HepG2 (cell line): ENCODE measurements at regions of chr1 and their contacts with region 1.

Region 1: GRCh38 chr1:230310381-230311163 is 115.6 kb downstream of the PGBD5 start:
- DNase-seq: peak; percentile 60
- ATAC-seq: peak; percentile 90
- H3K4me3 ChIP-seq: no peak overlapping the region
- H3K27ac ChIP-seq: no peak overlapping the region
- H3K4me1 ChIP-seq: 0 out of 2 replicates have a peak, but pooled peaks cover 5% of the 10 kb centered on the region
- H3K27me3 ChIP-seq: peaks cover 2 to 15% of the 10 kb centered on the region in 2 experiments; a peak in 2 of 5 replicates
- CTCF ChIP-seq: peak; percentile 94
- EP300 ChIP-seq: no peak
- POLR2A ChIP-seq: no peak
- RAD21 ChIP-seq: peak; percentile 87

Region 2: GRCh38 chr1:229661022-229661877 is 649.3 kb before region 1 on chr1:
- CTCF ChIA-PET with region 1: interaction called, 14 read pairs
- POLR2A ChIA-PET with region 1: no interaction called
- in situ Hi-C with region 1: loop called (anchors 5 kb)
- intact Hi-C with region 1: loop called (anchors 1 kb)
- DNase-seq: peak; percentile 32
- ATAC-seq: peak; percentile 94
- H3K4me3 ChIP-seq: no peak overlapping the region
- H3K27ac ChIP-seq: no peak overlapping the region
- H3K4me1 ChIP-seq: no peaks in the 10 kb centered on the region
- H3K27me3 ChIP-seq: no peaks in the 10 kb centered on the region
- CTCF ChIP-seq: peak; percentile 91
- EP300 ChIP-seq: no peak
- POLR2A ChIP-seq: no peak
- RAD21 ChIP-seq: peak; percentile 67

Region 3: DNA sequence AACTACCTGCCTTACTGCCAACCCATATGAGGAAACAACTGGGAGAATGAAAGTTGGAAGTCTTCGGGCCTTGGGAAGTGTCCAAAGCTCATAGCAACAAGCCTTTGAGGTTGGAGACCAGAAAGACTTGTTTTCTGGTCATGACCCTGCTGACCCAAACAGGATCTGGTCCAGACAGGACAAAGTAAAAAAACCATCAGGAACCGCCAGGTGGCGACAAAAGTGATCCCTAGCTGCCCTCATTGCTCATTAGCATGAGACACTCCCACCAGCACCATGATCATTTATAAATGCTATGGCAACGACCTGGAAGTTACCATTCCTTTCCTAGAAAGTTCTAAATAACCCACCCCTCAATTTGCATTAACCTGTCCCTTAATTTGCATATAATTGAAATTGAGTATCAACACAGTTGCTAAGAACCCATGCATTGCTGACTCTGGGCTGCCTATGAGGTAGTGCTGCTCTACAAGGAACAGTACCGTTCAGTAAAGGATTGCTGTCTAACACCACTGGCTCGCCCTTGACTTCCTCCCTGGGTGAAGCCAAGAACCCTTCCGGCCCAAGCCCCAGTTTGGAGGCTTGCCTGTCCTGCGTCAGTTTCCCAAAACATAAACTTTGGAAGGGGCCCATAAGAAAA is 595.5 kb before region 1 on chr1:
- CTCF ChIA-PET with region 1: interaction called, 13 read pairs
- POLR2A ChIA-PET with region 1: no interaction called
- in situ Hi-C with region 1: no loop called
- intact Hi-C with region 1: no loop called
- DNase-seq: peak; percentile 37
- ATAC-seq: peak; percentile 65
- H3K4me3 ChIP-seq: no peak overlapping the region
- H3K27ac ChIP-seq: no peak overlapping the region
- H3K4me1 ChIP-seq: peaks cover 16% of the 10 kb centered on the region
- H3K27me3 ChIP-seq: no peaks in the 10 kb centered on the region
- CTCF ChIP-seq: peak; percentile 56
- EP300 ChIP-seq: no peak
- POLR2A ChIP-seq: no peak
- RAD21 ChIP-seq: no peak

Region 4: DNA sequence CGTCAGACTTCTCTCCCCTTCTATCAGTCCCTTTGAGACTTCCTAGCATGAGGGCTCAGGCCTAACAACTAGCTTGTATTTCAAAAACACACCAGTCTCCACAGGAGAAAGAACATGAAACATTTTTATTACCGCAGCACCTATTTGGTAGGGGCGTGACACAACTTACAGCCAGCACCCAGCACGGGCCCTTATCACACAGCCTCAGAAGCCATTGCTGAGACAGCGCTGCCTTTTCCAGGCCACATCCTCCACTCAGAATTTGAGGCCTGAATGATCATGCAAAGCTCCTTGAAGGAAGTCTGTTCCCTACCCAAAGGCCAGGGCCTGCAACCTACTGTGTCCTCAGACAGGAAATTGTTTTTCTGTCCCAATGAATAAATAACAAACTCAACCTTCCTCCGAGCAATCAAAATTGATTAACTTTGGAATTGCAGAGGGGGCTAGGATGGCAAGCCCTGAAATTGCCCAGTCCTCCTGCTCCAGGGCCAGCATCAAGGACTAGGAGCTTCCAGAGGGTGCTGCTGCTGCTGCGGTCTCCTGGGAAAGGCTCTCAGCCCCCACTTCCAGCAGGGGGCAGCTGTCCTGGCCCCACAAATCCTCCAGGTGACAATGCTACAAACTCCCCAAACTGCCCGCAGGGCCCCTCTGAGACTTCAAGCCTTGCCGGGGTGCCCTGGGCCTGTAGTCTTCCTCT is 337.8 kb before region 1 on chr1:
- CTCF ChIA-PET with region 1: no interaction called
- POLR2A ChIA-PET with region 1: no interaction called
- in situ Hi-C with region 1: loop called (anchors 10 kb)
- intact Hi-C with region 1: no loop called
- DNase-seq: peak; percentile 9
- ATAC-seq: peak; percentile 87
- H3K4me3 ChIP-seq: no peak overlapping the region
- H3K27ac ChIP-seq: no peak overlapping the region
- H3K4me1 ChIP-seq: no peaks in the 10 kb centered on the region
- H3K27me3 ChIP-seq: 0 out of 5 replicates have a peak, but pooled peaks cover 0 to 3% of the 10 kb centered on the region in 2 experiments
- CTCF ChIP-seq: peak; percentile 67
- EP300 ChIP-seq: no peak
- POLR2A ChIP-seq: no peak
- RAD21 ChIP-seq: peak; percentile 60

Region 5: GRCh38 chr1:229979993-229980392 is 330.6 kb before region 1 on chr1:
- CTCF ChIA-PET with region 1: no interaction called
- POLR2A ChIA-PET with region 1: no interaction called
- in situ Hi-C with region 1: loop called (anchors 10 kb)
- intact Hi-C with region 1: loop called (anchors 5 kb)
- DNase-seq: no peak
- ATAC-seq: no peak
- H3K4me3 ChIP-seq: no peak overlapping the region
- H3K27ac ChIP-seq: no peak overlapping the region
- H3K4me1 ChIP-seq: peaks cover 15% of the 10 kb centered on the region
- H3K27me3 ChIP-seq: 0 out of 5 replicates have a peak, but pooled peaks cover 0 to 7% of the 10 kb centered on the region in 2 experiments
- CTCF ChIP-seq: no peak
- EP300 ChIP-seq: no peak
- POLR2A ChIP-seq: no peak
- RAD21 ChIP-seq: no peak